Activated T-helper 1 cell treated with anti-CD3 and anti-CD28 coated beads, Interleukin-12 subunit alpha, Interleukin-12 subunit beta, Interleukin-2, Interleukin-4 antibody, amounts not matched to agents 30 ng/mL and 10 ng/mL and 1 ng/mL, durations not matched to agents 14 hours and 24 hours and 36 hours (primary cell): ENCODE measurements at regions of chr7 and their contacts with region 1.

Region 1: GRCh38 chr7:2863461-2864066 is 19.5 kb upstream of the GNA12 start:
- DNase-seq: peak; percentile 75
- H3K4me3 Mint-ChIP-seq: peak overlapping the region; percentile 73
- H3K27ac Mint-ChIP-seq: peak overlapping the region; percentile 86
- H3K4me1 Mint-ChIP-seq: peaks cover 27% of the 10 kb centered on the region
- H3K27me3 Mint-ChIP-seq: no peaks in the 10 kb centered on the region

Region 2: GRCh38 chr7:2720582-2721491 is 142.7 kb before region 1 on chr7:
- intact Hi-C with region 1: loop called (anchors 5 kb)
- DNase-seq: peak; percentile 63
- H3K4me3 Mint-ChIP-seq: peak overlapping the region; percentile 34
- H3K27ac Mint-ChIP-seq: peak overlapping the region; percentile 65
- H3K4me1 Mint-ChIP-seq: peaks cover 49% of the 10 kb centered on the region
- H3K27me3 Mint-ChIP-seq: no peaks in the 10 kb centered on the region

Region 3: DNA sequence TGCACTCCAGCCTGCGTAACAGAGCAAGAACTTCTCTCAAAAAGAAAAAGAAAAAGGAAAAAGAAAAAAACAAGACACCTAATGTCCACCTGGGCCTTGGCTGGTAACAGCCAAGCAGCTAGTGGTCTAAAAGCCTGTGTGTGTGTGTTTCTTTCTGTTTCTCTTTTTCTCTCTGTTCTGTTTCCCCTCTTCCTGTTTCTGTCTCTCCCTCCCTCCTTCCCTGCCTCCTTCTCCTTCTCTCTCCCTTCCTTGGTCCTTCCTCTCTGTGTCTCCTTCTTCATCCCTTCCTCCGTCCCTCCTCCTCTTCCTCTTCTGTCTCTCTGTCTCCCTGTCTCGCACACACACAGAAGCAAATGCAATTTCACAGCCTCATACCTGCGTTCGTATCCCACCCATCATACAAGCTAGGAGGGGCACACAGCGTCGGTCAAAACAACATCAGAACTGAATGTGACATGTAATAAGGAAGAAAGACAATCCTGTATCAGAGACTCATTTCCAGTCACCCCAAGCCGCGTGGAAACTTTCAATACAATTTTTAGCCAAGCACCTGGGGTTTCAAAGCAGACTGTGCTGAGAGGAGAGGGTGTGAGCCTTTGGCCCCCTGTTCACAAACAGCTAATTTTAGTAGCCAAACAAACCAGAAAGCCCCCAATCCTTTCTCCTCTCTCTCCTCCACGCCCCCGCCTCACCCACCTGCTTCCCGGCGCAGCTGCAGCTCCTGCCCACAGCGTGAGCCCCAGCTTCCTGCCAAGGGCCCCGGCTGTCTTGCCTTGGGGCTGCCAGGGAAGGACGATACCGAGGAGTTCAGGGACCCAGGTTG is 30.8 kb after region 1 on chr7:
- intact Hi-C with region 1: loop called (anchors 1 kb)
- DNase-seq: peak; percentile 43
- H3K4me3 Mint-ChIP-seq: peak overlapping the region; percentile 87
- H3K27ac Mint-ChIP-seq: peak overlapping the region; percentile 99
- H3K4me1 Mint-ChIP-seq: peaks cover 37% of the 10 kb centered on the region
- H3K27me3 Mint-ChIP-seq: peaks cover 1% of the 10 kb centered on the region

Region 4: GRCh38 chr7:3103614-3104398 is 240.2 kb after region 1 on chr7:
- intact Hi-C with region 1: loop called (anchors 5 kb)
- DNase-seq: no peak
- H3K4me3 Mint-ChIP-seq: no peak overlapping the region
- H3K27ac Mint-ChIP-seq: peak overlapping the region; percentile 32
- H3K4me1 Mint-ChIP-seq: peaks cover 70% of the 10 kb centered on the region
- H3K27me3 Mint-ChIP-seq: no peaks in the 10 kb centered on the region

Region 5: DNA sequence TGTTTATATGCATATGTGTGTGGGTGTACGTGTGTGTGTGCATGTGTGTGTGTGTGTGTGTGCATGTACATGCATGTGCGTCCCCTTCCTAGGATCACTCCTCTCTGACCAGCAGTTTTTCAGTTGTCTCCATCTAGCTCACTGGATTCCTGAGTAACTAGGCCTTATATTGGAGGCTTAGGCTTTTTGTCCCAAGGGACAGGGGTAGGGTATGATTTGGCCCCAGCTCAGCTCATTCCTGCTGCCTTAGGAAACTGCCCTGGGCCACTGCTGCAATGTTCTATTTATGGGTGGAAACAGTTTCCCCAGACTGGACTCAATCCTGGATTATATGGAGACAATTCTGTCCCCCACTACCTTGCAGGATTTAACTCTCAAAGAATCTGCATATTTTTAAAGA is 368.7 kb after region 1 on chr7:
- intact Hi-C with region 1: no loop called
- DNase-seq: no peak
- H3K4me3 Mint-ChIP-seq: no peak overlapping the region
- H3K27ac Mint-ChIP-seq: no peak overlapping the region
- H3K4me1 Mint-ChIP-seq: peaks cover 13% of the 10 kb centered on the region
- H3K27me3 Mint-ChIP-seq: peaks cover 3% of the 10 kb centered on the region

Region 6: GRCh38 chr7:3300651-3301378 is 437.3 kb after region 1 on chr7 and contains the start of gene SDK1:
- intact Hi-C with region 1: loop called (anchors 1 kb)
- DNase-seq: peak; percentile 88
- H3K4me3 Mint-ChIP-seq: peak within 1 kb of the TSS; percentile 73
- H3K27ac Mint-ChIP-seq: peak within 1 kb of the TSS; percentile 40
- H3K4me1 Mint-ChIP-seq: peaks cover 18% of the 10 kb centered on the region
- H3K27me3 Mint-ChIP-seq: peaks cover 53% of the 10 kb centered on the region
- total RNA-seq, gene SDK1: 0.08 and 0.15 TPM in 2 replicates